ENCODE measurements at regions of chr16 and their contacts with region 1.

Region 1: DNA sequence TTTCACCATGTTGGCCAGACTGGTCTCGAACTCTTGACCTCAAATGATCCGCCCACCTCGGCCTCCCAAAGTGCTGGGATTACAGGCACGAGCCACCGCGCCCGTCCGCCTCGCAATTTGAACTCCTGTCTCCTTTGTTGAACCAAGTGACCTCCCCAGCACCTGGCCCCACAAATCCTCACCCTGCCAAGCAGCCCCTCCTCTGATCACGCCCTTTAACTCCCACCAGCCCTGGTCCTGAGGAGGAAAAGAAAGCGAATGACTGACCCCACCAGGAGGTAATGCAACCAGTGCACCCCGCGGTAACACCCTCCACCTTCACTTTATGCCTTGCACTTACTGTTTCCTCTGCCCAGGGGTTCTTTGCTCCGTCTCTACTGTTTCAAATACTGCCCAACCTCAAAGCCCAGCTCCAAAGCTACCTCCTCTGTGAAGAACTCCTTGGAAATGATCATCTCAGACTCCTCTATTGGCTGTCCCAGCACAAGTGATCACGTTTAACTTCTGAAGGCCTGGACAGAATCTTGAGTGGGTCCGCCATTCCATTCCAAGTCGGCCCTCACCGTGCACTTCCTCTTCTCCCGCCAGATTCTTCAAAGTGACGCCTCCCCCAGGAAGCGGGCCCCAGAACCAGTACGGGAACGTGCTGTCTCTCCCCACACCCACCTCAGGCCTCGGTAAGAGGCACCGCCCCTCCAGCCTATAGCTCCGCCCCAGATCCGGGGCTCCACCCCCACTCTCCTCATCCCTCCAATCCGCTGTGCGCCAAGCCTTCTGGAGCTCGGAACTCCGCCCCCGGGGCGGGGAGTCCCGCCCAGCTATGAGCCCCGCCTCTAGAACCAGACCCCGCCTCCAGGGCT is 4.4 kb downstream of the CD19 start:
- DNase-seq: peak; percentile 89
- H3K4me3 ChIP-seq: peak overlapping the region in 2 of 4 donors; percentile 13 to 36
- H3K27ac ChIP-seq: peak overlapping the region in 1 of 4 donors; percentile 10
- H3K4me1 ChIP-seq: peaks cover 0 to 6% (median 2%) of the 10 kb centered on the region in 4 donors
- H3K27me3 ChIP-seq: no peaks in the 10 kb centered on the region
- CTCF ChIP-seq: no peak
- EP300 ChIP-seq: no peak
- POLR2A ChIP-seq: no peak

Region 2: DNA sequence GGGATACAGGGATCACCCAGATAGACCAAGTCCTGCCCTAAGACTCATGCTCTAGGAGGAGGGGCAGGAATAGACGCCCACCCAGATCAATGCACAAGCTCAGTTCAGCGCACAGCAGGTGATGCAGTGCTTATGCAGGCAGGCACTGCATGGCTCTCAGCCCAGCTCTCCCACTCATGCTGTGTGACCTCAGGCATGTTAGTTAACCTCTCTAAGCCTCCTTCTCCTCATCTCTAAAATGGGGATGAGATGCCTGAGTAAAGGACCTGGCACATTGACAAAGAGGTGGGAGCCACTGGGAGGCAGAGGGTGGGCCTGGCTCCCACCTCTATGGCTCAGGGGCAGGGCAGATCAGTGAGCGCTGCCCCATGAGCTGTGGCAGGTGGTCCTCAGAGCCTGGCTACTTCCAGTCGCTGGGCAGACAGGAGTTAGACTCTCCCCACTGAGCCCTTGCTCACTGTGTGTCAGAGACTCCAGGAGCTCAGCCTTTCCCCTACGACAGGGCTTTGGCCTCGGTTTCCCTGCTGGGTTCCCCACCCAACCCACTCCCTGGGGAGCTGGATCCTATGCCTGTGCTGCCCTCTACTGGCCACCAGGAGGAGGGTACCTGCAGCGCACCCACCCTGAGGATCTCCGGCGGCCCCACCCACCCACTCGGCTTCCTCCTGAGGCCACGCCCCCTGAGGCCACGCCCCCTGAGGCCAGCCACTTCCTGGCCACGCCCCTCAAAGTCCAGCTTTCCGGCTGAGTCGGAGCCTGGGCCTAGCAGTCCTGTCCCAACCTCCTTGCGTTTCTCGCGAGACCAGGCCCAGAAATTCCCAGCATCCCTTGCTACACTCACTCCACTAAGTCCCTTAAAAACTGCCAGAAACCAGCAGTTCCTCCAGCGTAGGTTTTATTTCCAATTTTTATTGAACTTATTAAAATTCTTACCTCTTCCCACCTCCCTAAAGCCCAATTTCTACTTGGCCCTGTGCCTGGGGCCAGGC is 1068.7 kb before region 1 on chr16:
- in situ Hi-C with region 1: no loop called
- intact Hi-C with region 1: no loop called
- DNase-seq: peak; percentile 71
- H3K4me3 ChIP-seq: no peak overlapping the region
- H3K27ac ChIP-seq: no peak overlapping the region
- H3K4me1 ChIP-seq: no peaks in the 10 kb centered on the region
- H3K27me3 ChIP-seq: no peaks in the 10 kb centered on the region
- CTCF ChIP-seq: peak in 4 of 5 experiments; percentile 15 to 40 (median 35)
- EP300 ChIP-seq: no peak
- POLR2A ChIP-seq: no peak

Region 3: GRCh38 chr16:28846080-28846932 is 89.8 kb before region 1 on chr16 and contains the start of gene TUFM:
- in situ Hi-C with region 1: no loop called
- intact Hi-C with region 1: no loop called
- DNase-seq: peak; percentile 98
- H3K4me3 ChIP-seq: peak within 1 kb of the TSS; percentile 84 to 93 (median 89)
- H3K27ac ChIP-seq: peak within 1 kb of the TSS; percentile 87 to 92 (median 88)
- H3K4me1 ChIP-seq: peaks cover 16 to 26% (median 20%) of the 10 kb centered on the region in 4 donors
- H3K27me3 ChIP-seq: no peaks in the 10 kb centered on the region
- CTCF ChIP-seq: peak; percentile 49 to 83 (median 71)
- EP300 ChIP-seq: no peak
- POLR2A ChIP-seq: peak; percentile 74
- total RNA-seq, gene TUFM: 126 to 190 (median 143) TPM

Region 4: DNA sequence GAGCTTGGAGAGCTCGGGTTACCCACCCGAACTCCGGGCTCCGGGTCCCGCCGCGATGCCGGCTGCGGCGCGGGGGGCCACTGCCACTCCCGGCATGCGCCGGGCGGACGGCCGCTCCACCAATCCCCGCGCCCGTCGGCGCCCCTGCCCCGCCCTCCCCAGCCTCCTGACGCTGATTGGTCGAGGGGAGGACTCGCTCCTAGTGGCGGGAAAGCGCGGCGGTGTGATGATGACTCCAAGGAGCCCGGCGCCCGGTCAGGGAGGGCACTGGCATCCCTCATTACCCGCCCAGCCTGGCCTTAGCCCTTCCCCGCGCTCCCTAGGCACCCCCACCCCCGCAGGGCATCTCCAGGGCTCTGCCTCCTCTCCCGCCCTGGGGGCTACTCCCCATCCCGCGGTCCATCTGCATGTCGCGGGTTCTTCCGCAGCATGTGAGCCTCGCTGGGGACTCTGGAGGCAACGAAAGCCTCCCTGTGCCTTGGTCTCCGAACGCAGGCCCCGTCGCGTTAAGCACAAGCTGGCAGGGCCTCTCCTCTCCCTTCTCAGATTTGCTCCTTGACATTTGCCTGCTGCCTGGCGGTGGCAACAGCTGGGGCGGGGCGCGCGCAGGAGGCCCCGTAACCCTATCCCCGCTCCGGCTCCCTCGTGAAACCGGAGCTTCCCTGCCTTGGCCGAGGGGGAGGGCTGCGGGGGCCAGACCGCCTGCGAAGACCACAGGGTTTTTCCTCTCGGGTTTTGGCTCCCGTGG is 56.1 kb before region 1 on chr16:
- in situ Hi-C with region 1: no loop called
- intact Hi-C with region 1: loop called (anchors 2 kb)
- DNase-seq: peak; percentile 90
- H3K4me3 ChIP-seq: peak overlapping the region; percentile 51 to 69 (median 58)
- H3K27ac ChIP-seq: peak overlapping the region in 3 of 4 donors; percentile 24 to 45 (median 34)
- H3K4me1 ChIP-seq: peaks cover 5 to 17% (median 13%) of the 10 kb centered on the region in 4 donors
- H3K27me3 ChIP-seq: peaks cover 9% of the 10 kb centered on the region
- CTCF ChIP-seq: peak in 4 of 5 experiments; percentile 28 to 56 (median 38)
- EP300 ChIP-seq: no peak
- POLR2A ChIP-seq: no peak

Measured in transverse colon (tissue), 4 donors.